Activated CD4-positive, alpha-beta memory T cell treated with anti-CD3 and anti-CD28 coated beads, Interleukin-2, amount 10 ng/mL, durations not matched to agents 7 days and 5 days (primary cell): ENCODE measurements at regions of chr12 and their contacts with region 1.

Region 1: DNA sequence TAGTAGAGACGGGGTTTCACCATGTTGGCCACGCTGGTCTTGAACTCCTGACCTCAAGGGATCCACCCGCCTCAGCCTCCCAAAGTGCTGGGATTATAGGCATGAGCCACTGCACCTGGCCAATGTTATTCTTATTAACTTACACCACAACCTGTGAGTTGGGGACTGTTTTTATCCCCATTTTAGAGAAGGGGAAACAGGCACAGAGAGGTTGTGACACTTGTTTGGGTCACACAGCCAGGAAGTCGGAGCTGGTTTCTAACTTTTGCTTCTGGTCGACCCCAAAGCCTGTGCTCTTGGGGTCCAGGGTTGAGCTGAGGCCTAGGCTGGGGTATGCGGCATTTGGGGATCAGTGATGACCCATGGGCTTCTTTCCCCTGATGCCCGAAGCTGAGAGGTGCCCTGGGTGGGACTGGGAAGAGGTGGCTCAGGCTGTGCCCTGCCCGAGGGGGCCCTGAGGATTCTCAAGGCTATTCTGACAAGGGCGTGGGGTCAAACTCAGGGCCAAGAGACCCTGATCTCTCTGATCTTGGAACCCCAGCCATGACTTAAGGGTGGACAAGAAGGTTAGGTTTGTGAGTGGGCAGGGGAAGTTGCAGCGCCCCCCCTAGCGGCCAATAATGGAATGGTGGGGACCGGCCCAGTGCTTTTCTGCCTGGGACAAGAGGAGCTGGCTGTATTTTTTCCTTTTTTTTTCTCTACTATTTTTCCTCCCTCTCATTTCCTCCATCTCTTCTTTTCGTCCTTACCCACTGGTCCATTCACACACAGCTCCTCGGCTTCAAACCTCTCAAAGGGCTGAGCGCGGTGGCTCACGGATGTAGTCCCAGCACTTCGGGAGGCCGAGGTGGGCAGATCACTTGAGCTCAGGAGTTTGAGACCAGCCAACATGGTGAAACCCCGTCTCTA is 3.0 kb downstream of the SDSL start:
- DNase-seq: peak; percentile 58
- H3K4me3 Mint-ChIP-seq: no peak overlapping the region
- H3K27ac Mint-ChIP-seq: no peak overlapping the region
- H3K4me1 Mint-ChIP-seq: peaks cover 10% of the 10 kb centered on the region
- H3K27me3 Mint-ChIP-seq: peaks cover 8% of the 10 kb centered on the region

Region 2: DNA sequence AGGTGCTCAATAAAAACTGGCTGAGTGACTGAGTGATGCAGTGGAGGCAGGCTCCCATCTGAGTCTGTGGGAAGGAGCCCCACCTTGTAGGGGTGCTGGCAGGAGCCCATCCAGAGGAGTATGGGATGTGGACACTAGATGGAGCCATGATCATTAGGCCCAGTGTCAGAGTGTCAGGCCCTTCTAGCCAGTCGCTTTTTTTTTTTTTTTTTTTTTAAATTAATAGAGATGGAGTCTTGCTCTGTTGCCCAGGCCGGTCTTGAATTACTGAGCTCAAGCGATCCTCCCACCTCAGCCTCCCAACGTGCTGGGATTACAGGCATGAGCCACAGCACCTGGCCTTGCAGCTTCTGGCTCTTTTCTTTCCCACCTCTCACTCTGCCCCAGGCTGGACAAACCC is 228.2 kb before region 1 on chr12:
- CTCF ChIA-PET with region 1: interaction called, 17 read pairs
- POLR2A ChIA-PET with region 1: no interaction called
- DNase-seq: peak; percentile 64
- H3K4me3 Mint-ChIP-seq: no peak overlapping the region
- H3K27ac Mint-ChIP-seq: no peak overlapping the region
- H3K4me1 Mint-ChIP-seq: peaks cover 2% of the 10 kb centered on the region
- H3K27me3 Mint-ChIP-seq: no peaks in the 10 kb centered on the region